Spleen (tissue), 13 donors: ENCODE measurements at regions of chr3 and their contacts with region 1.

Region 1: GRCh38 chr3:100893590-100893989 is 99.6 kb downstream of the ABI3BP start:
- DNase-seq: no peak
- H3K4me3 ChIP-seq: no peak overlapping the region
- H3K27ac ChIP-seq: no peak overlapping the region
- H3K4me1 ChIP-seq: peaks cover 0 to 6% (median 3%) of the 10 kb centered on the region in 6 donors
- H3K27me3 ChIP-seq: no peaks in the 10 kb centered on the region
- CTCF ChIP-seq: peak in 7 of 11 experiments; percentile 18 to 47 (median 38)
- POLR2A ChIP-seq: no peak

Region 2: GRCh38 chr3:101195951-101196713 is 302.5 kb after region 1 on chr3:
- intact Hi-C with region 1: loop called (anchors 10 kb)
- DNase-seq: no peak
- H3K4me3 ChIP-seq: no peak overlapping the region
- H3K27ac ChIP-seq: no peak overlapping the region
- H3K4me1 ChIP-seq: no peaks in the 10 kb centered on the region
- H3K27me3 ChIP-seq: no peaks in the 10 kb centered on the region
- CTCF ChIP-seq: peak in 5 of 11 experiments; percentile 12 to 47 (median 44)
- POLR2A ChIP-seq: no peak